Right cardiac atrium (tissue), 5 donors: ENCODE measurements at regions of chr1 and their contacts with region 1.

Region 1: DNA sequence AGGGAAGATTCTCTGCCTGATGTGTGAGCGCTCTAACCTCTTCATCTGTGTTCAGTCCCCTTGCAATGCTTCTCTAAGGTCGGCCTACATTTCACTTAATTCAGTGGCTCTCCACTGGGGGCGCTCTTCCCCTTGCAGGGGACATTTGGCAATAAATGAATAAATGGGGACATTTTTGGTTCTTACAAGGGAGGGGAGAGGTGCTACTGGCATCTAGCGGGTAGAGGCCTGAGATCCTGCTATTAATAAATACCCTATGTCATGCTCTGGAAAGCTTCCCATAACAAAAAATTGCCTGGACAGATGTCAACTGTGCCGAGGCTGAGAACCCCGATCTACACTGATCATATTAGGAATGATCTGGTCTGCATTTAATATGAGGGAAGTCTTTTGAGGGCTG is 25.9 kb upstream of the DNAJC11 start:
- DNase-seq: peak; percentile 50 to 75 (median 72)
- ATAC-seq: peak; percentile 38 to 54
- H3K4me3 ChIP-seq: no peak overlapping the region
- H3K27ac ChIP-seq: no peak overlapping the region
- H3K4me1 ChIP-seq: no peaks in the 10 kb centered on the region
- H3K27me3 ChIP-seq: no peaks in the 10 kb centered on the region

Region 2: GRCh38 chr1:6634371-6635052 is 93.0 kb before region 1 on chr1:
- intact Hi-C with region 1: no loop called
- DNase-seq: peak; percentile 57 to 85 (median 84)
- ATAC-seq: peak; percentile 61
- H3K4me3 ChIP-seq: no peak overlapping the region
- H3K27ac ChIP-seq: no peak overlapping the region
- H3K4me1 ChIP-seq: no peaks in the 10 kb centered on the region
- H3K27me3 ChIP-seq: no peaks in the 10 kb centered on the region

Region 3: GRCh38 chr1:6784560-6785317 is 57.2 kb after region 1 on chr1:
- intact Hi-C with region 1: loop called in 1 of 4 experiments (anchors 10 kb)
- DNase-seq: peak; percentile 100
- ATAC-seq: peak; percentile 95
- H3K4me3 ChIP-seq: peak overlapping the region; percentile 86
- H3K27ac ChIP-seq: peak overlapping the region; percentile 92
- H3K4me1 ChIP-seq: no peaks in the 10 kb centered on the region
- H3K27me3 ChIP-seq: no peaks in the 10 kb centered on the region

Region 4: DNA sequence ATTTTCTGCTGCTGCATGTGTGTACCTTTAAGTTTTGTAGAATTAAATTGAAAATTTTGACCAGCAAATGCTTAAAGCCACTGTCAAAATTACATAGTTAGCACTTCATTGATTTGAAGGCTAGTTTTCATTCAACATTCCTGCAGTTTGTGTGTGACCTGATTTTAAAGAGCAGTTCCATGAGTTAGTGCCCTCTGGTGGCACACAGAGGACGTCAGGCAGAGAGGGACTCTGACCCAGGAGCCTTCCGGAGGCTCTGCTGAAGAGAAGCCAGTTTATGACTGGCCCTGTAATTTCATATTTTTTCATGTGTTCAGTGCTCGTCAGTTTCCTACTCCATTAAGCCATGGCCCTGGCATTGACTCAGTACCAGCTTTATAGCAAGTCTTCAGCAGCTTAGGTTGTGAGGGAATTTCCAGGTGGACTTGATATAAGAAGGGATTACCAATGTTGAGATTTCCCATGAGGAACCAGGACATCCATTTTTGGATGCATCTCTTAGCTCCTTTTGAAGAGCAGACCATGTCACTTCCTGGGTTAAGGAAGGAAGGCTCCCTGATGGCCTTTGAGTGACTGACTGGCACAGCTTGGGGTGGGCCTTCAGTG is 162.4 kb after region 1 on chr1:
- intact Hi-C with region 1: loop called in 2 of 4 experiments (anchors 5 to 10 kb)
- DNase-seq: peak; percentile 49 to 83 (median 68)
- ATAC-seq: peak; percentile 59 to 78
- H3K4me3 ChIP-seq: no peak overlapping the region
- H3K27ac ChIP-seq: no peak overlapping the region
- H3K4me1 ChIP-seq: no peaks in the 10 kb centered on the region
- H3K27me3 ChIP-seq: no peaks in the 10 kb centered on the region

Region 5: GRCh38 chr1:7070389-7071029 is 343.0 kb after region 1 on chr1:
- intact Hi-C with region 1: loop called in 3 of 4 experiments (anchors 5 to 10 kb)
- DNase-seq: peak; percentile 54 to 71 (median 66)
- ATAC-seq: peak; percentile 77 to 92
- H3K4me3 ChIP-seq: peak overlapping the region; percentile 8
- H3K27ac ChIP-seq: no peak overlapping the region
- H3K4me1 ChIP-seq: no peaks in the 10 kb centered on the region
- H3K27me3 ChIP-seq: no peaks in the 10 kb centered on the region

Region 6: DNA sequence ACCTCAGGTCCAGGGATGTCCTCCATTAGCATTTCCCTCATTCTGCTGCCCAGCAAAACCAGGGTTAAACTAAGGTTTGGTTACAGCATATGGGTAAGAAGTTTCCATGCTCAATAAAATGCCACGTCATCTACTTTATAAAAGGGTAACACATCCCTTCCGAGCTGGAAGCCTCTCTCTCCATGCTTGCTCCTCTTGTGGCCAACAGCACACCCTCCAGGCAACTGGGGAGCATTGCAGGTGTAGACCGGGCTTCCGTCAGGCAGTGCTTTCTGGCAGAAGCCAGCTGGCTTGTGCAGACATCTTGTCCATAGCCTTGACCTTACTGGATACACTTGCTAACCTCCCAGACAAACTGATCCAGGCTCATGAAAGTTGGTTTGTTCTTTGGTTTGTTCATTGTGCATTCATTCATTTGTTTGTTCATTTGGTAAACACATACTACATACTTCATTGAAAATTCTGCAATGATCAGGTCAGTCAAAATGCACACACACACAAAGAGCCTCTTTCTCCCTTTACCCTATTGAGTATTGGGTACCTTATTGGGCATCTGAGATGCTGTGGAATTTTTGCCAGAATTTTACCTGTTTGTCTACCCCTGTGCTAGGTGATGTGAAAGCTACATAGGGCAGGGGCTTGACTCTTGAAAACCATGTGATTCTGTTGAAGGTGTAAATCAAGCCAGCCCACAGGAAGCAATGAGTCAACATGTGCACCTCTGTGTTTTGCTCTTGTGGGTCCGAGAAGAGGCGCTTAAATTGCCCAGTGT is 480.5 kb after region 1 on chr1:
- intact Hi-C with region 1: loop called in 3 of 4 experiments (anchors 5 to 10 kb)
- DNase-seq: no peak
- ATAC-seq: peak; percentile 52 to 74
- H3K4me3 ChIP-seq: no peak overlapping the region
- H3K27ac ChIP-seq: no peak overlapping the region
- H3K4me1 ChIP-seq: no peaks in the 10 kb centered on the region
- H3K27me3 ChIP-seq: no peaks in the 10 kb centered on the region

Region 7: GRCh38 chr1:7218210-7218832 is 490.8 kb after region 1 on chr1:
- intact Hi-C with region 1: loop called in 2 of 4 experiments (anchors 5 to 10 kb)
- DNase-seq: no peak
- ATAC-seq: no peak
- H3K4me3 ChIP-seq: no peak overlapping the region
- H3K27ac ChIP-seq: no peak overlapping the region
- H3K4me1 ChIP-seq: no peaks in the 10 kb centered on the region
- H3K27me3 ChIP-seq: no peaks in the 10 kb centered on the region